IMR-90 (cell line): ENCODE measurements at regions of chr16 and their contacts with region 1.

Region 1: DNA sequence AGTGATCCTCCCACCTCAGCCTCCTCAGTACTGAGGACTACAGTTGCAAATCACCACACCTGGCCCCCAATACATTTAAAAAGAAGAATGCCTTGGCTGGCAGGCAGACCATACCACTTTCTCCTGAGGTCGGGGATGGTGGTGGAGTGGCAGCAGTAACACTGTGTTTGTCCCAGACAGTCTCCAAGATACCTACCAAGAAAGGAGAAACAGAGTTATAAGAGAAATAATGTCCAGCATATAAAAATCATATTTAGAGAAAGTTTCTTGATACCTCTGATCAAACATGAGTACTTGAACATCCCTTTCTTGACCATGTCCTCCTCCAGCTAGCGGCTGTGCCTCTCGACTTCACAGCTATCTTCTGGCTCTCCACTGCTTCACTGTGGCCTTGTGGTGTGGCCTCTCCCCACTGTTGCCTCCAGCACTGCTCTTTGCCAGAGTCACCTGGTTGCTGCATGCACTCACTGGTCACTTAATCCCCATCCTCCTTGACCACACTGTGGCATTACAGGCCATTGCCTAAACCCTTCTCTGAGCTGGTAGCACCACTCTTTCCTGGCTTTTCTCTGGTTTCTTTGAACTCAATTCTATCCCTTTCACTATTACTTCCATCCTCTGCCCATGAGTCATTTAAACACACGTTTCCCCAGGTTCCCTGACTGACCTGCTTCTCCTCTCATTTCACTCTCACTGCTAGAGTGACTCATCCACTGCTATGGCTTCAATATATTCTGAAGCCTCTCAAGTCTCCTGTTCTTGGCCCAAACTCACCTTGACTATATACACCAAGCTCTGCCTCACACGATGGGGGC is 45.2 kb downstream of the XPO6 start:
- DNase-seq: peak; percentile 81
- ATAC-seq: peak; percentile 22; the same call in 1 of the 2 replicates
- H3K4me3 ChIP-seq: no peak overlapping the region
- H3K27ac ChIP-seq: peak overlapping the region; percentile 15; the same call in 1 of the 2 replicates
- H3K4me1 ChIP-seq: peaks cover 9% of the 10 kb centered on the region
- H3K27me3 ChIP-seq: no peaks in the 10 kb centered on the region
- CTCF ChIP-seq: no peak
- POLR2A ChIP-seq: no peak
- RAD21 ChIP-seq: no peak

Region 2: DNA sequence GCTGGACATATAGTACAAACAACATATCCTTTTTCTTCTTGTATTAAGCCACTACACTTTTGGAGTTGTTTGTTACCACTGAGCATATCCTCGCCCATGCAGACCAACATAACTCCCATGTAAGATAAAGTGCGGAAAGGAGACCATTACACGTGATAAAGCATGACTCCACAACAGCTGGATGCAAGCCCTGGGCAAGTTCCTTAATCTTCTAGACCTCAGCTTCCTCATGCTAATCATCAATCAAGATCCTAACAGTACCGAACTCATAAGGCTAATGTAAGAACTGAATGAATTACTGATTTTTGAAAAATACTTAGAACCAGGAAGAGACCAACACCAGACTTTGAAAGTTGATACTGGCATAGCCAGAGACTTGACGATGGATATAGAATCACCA is 56.1 kb before region 1 on chr16:
- CTCF ChIA-PET with region 1: no interaction called
- POLR2A ChIA-PET with region 1: no interaction called
- dilution Hi-C with region 1: no loop called
- in situ Hi-C with region 1: loop called (anchors 10 kb)
- intact Hi-C with region 1: no loop called
- DNase-seq: no peak
- ATAC-seq: no peak
- H3K4me3 ChIP-seq: no peak overlapping the region
- H3K27ac ChIP-seq: peak overlapping the region; percentile 61; the same call in 1 of the 2 replicates
- H3K4me1 ChIP-seq: peaks cover 10% of the 10 kb centered on the region
- H3K27me3 ChIP-seq: no peaks in the 10 kb centered on the region
- CTCF ChIP-seq: no peak
- POLR2A ChIP-seq: no peak
- RAD21 ChIP-seq: no peak

Region 3: DNA sequence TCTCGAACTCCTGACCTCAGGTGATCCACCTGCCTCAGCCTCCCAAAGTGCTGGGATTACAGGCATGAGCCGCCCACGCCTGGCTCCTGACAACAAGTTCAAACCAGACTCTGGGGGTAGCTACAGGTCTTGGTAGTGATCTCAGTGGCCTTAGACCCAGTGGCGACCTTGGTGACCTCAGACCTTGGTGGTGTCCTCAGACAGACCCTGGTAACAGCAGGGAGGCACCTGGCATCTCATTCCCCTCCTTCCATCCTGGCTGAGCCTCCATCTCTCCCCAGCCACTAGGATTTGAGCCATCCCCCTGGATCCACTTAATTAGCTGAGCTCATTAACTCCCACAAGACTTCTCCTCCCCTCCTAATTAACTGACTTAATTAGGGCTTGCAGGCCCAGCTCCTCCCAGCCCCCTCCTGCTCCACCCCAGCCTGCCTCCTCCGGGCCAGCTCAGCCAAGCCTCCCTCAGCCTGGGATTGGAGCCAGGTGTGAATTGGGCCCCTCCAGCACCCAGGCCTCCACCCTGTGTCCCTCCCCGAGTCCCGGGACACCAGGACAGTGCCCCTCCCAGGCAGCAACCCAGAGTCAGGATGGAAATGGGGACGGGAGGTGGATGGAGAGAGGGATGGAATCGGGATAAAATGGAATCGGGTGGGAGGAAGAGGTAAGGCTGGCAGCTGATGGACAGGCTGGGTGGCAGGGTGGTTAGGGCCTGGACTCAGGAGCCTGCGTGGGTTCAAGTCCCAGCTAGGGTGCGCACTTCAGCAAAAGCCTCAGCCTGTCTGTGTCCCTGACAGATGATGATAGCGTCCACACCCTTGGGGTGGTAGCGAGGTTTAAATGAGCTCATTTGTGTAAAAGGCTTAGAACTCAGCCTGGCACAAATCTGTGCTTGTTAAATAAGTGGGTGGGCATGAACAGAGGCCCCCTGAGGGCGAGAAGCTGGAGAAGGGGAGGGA is 114.6 kb after region 1 on chr16:
- CTCF ChIA-PET with region 1: no interaction called
- POLR2A ChIA-PET with region 1: no interaction called
- dilution Hi-C with region 1: no loop called
- in situ Hi-C with region 1: no loop called
- intact Hi-C with region 1: no loop called
- DNase-seq: no peak
- ATAC-seq: no peak
- H3K4me3 ChIP-seq: no peak overlapping the region
- H3K27ac ChIP-seq: no peak overlapping the region
- H3K4me1 ChIP-seq: no peaks in the 10 kb centered on the region
- H3K27me3 ChIP-seq: peaks cover 19% of the 10 kb centered on the region
- CTCF ChIP-seq: no peak
- POLR2A ChIP-seq: no peak
- RAD21 ChIP-seq: no peak

Region 4: GRCh38 chr16:28481986-28482385 is 315.4 kb after region 1 on chr16:
- CTCF ChIA-PET with region 1: no interaction called
- POLR2A ChIA-PET with region 1: no interaction called
- dilution Hi-C with region 1: no loop called
- in situ Hi-C with region 1: no loop called
- intact Hi-C with region 1: no loop called
- DNase-seq: no peak
- ATAC-seq: no peak
- H3K4me3 ChIP-seq: no peak overlapping the region
- H3K27ac ChIP-seq: no peak overlapping the region
- H3K4me1 ChIP-seq: no peaks in the 10 kb centered on the region
- H3K27me3 ChIP-seq: no peaks in the 10 kb centered on the region
- CTCF ChIP-seq: no peak
- POLR2A ChIP-seq: no peak
- RAD21 ChIP-seq: no peak